B cell (primary cell): ENCODE measurements at regions of chr12 and their contacts with region 1.

Region 1: DNA sequence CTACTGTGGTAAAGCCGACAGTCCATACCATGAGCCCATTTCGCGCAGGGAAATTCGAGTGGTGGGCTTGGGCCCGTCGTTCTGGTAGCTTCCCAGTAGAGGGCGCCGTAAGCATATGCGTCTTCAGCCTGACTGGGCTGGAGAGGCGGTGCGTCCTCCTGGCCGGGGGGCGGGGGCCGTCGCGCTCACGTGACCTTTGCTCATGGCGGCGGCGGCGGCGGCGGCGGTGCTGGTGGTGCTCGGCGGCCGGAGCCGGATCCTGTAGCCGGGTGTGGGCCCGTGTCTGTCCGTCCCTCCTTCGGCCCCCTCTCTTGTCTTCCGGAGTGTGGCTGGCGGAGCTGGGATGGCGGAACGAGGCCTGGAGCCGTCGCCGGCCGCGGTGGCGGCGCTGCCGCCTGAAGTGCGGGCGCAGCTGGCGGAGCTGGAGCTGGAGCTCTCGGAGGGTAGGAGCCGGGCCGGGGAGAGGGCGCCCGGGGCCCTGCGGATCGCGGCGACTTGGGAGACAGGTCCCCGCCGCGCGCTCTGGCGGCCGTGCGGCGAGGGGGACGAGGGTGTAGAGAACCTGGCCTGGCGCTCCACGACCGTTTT is at the start of gene DIP2B:
- DNase-seq: peak; percentile 96
- ATAC-seq: peak; percentile 89
- H3K4me3 ChIP-seq: peak within 1 kb of the TSS; percentile 74 to 99 (median 87)
- H3K4me3 Mint-ChIP-seq: peak within 1 kb of the TSS; percentile 94
- H3K27ac ChIP-seq: peak within 1 kb of the TSS; percentile 65 to 89
- H3K27ac Mint-ChIP-seq: peak within 1 kb of the TSS; percentile 94
- H3K4me1 ChIP-seq: peaks cover 41 to 44% of the 10 kb centered on the region in 2 donors
- H3K4me1 Mint-ChIP-seq: peaks cover 44% of the 10 kb centered on the region
- H3K27me3 ChIP-seq: no peaks in the 10 kb centered on the region
- H3K27me3 Mint-ChIP-seq: no peaks in the 10 kb centered on the region
- CTCF ChIP-seq: peak; percentile 87
- total RNA-seq, gene DIP2B: 38.8 and 45.5 TPM in 2 replicates

Region 2: DNA sequence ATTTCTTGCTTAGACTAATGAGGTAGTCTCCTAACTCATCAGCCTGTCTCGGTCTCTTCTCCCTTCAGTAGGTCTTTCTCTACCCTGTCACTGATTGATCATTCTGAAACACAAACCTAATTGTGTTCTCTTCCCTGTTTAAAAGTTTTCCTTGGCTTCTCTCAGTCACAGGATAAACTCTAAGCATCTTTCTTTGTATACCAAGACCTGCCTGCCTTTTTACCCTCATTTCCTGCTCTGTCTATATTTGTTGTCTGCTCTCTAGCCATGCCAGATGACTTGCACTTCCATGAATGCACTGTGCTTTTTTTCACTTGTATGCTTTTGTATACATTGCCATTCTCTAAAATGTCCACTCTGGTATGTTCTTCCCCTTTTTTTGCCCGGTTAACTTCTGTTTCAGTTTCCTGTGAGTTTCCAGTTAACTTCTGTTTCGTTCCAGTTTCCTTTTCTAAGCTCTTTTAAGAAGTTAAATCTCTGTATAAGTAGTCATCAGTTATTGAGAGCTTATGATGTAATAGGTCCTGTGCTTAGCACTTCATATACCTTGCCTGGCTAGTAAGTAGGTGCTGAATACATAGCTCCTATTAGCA is 12.7 kb after region 1 on chr12:
- CTCF ChIA-PET with region 1: interaction called, 31 read pairs
- POLR2A ChIA-PET with region 1: interaction called, 10 read pairs
- intact Hi-C with region 1: loop called (anchors 1 kb)
- DNase-seq: peak; percentile 86
- ATAC-seq: peak; percentile 70
- H3K4me3 ChIP-seq: peak overlapping the region in 4 of 5 experiments; percentile 27 to 55 (median 38)
- H3K4me3 Mint-ChIP-seq: no peak overlapping the region
- H3K27ac ChIP-seq: peak overlapping the region; percentile 82 to 85
- H3K27ac Mint-ChIP-seq: no peak overlapping the region
- H3K4me1 ChIP-seq: peaks cover 86 to 97% of the 10 kb centered on the region in 2 donors
- H3K4me1 Mint-ChIP-seq: peaks cover 57% of the 10 kb centered on the region
- H3K27me3 ChIP-seq: no peaks in the 10 kb centered on the region
- H3K27me3 Mint-ChIP-seq: no peaks in the 10 kb centered on the region
- CTCF ChIP-seq: no peak

Region 3: DNA sequence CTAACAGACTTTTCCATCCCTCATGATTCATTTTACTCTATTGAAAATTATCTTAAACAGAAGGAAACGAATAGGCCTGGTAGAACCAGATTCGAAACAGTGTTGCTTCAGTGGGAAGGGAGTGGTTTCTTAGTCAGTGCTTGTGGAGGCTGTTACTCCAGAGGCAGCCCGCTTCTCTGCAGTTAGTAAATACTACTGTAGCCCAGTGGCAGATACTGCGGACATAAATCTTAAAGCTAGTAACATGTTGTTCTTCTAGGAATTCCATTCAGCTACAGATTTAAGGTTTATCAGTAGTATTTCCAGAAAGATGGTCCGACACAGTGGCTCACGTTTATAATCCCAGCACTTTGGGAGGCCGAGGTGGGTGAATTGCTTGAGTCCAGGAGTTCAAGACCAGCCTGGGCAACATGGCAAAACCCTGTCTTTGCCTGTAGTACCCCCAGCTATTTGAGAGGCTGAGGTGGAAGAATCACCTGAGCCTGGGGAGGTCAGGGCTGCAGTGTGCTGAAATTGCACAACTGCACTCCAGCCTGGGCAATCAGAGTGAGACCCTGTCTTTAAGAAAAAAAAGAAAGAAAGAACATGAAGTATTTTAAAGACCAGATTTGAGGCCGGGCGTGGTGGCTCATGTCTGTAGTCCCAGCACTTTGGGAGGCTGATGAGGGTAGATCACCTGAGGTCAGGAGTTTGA is 45.8 kb after region 1 on chr12:
- CTCF ChIA-PET with region 1: no interaction called
- POLR2A ChIA-PET with region 1: no interaction called
- intact Hi-C with region 1: loop called (anchors 10 kb)
- DNase-seq: no peak
- ATAC-seq: no peak
- H3K4me3 ChIP-seq: no peak overlapping the region
- H3K4me3 Mint-ChIP-seq: no peak overlapping the region
- H3K27ac ChIP-seq: peak overlapping the region in 1 of 2 donors; percentile 12
- H3K27ac Mint-ChIP-seq: no peak overlapping the region
- H3K4me1 ChIP-seq: peaks cover 3 to 18% of the 10 kb centered on the region in 2 donors
- H3K4me1 Mint-ChIP-seq: peaks cover 59% of the 10 kb centered on the region
- H3K27me3 ChIP-seq: no peaks in the 10 kb centered on the region
- H3K27me3 Mint-ChIP-seq: no peaks in the 10 kb centered on the region
- CTCF ChIP-seq: no peak

Region 4: DNA sequence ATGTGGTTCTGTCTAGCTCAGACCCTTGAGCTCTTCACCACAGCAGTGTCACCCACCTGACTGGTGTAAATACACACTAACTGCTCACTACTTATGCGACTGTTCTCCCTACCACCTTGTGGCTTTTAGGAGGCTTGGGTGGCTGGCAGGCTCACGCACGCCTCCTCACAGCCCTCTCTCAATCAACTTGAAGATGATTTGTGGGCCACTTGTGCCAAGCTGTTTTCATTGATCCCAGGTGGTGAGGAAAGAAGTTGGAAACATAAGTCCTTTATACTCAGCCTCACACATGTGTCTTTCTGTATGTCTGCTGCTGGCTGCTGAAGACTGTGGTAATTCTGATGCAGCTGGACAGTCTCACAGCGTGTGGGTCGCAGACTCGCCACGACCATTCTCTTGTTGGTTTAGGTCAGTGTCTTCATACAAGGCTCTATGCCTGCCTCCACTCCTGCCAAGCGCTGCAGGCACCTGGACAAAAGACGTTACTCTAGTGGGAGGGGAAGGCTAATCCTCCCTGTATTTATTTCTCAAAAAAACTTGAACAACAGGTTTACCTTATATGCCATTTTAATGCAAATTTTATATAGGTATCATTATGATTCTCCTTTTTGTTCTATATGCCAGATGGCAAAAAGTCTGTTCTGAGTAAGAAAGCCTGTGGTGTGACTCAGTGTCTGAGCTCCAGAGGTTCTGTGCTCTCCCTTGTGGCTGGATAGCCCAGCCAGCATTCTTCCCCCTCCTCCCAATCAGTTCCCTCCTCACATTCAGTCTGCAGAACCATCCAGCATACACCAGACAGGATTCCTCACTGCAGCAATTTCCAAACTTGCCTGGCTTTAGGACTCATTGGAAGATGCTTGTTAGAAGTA is 115.5 kb after region 1 on chr12:
- CTCF ChIA-PET with region 1: interaction called, 10 read pairs
- POLR2A ChIA-PET with region 1: no interaction called
- intact Hi-C with region 1: no loop called
- DNase-seq: no peak
- ATAC-seq: no peak
- H3K4me3 ChIP-seq: no peak overlapping the region
- H3K4me3 Mint-ChIP-seq: no peak overlapping the region
- H3K27ac ChIP-seq: peak overlapping the region in 1 of 2 donors; percentile 70
- H3K27ac Mint-ChIP-seq: peak overlapping the region; percentile 47
- H3K4me1 ChIP-seq: peaks cover 29% of the 10 kb centered on the region in 2 donors
- H3K4me1 Mint-ChIP-seq: peaks cover 62% of the 10 kb centered on the region
- H3K27me3 ChIP-seq: no peaks in the 10 kb centered on the region
- H3K27me3 Mint-ChIP-seq: no peaks in the 10 kb centered on the region
- CTCF ChIP-seq: no peak

Region 5: DNA sequence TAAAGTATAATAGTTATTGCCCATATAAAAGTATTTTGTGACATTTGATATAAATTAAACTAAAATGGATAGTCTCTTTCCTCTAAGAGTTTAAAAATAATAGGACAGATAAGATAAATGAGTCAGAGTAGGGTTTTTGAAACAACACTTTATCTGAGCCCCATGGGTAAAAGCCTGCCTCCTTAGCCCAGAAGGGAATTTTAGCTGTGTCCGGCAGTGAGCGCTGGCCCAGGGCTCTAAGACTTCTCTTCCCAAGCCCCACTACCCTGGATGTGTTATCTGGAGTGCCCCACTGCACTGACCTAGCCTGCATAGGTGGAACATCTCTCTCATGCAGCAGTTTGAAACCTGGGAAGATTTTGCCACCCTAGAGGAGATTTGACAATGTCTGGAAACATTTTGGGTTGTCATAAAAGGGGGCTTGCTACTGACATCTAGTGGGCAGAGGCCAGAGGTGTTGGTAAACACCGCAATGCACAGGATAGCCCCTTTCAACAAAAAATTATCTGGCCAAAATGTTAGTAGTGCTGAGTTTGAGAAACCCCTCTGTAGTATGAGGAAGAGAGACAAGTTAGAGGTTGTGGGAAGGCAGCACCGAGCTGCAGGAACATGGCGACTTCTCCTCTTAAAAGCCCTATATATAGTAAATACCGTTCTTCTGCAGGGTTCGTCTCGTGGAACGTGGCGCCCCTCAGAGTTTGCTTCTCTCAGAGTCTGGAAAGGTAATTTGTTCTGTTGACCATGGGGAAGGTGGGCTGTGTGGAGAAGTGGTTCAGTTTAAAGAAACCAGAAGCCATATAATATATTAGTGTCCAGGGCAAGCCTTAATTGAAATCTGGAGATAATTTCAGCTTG is 229.7 kb after region 1 on chr12:
- CTCF ChIA-PET with region 1: interaction called, 7 read pairs
- POLR2A ChIA-PET with region 1: no interaction called
- intact Hi-C with region 1: loop called (anchors 2 kb)
- DNase-seq: peak; percentile 41
- ATAC-seq: peak; percentile 39
- H3K4me3 ChIP-seq: no peak overlapping the region
- H3K4me3 Mint-ChIP-seq: no peak overlapping the region
- H3K27ac ChIP-seq: no peak overlapping the region
- H3K27ac Mint-ChIP-seq: no peak overlapping the region
- H3K4me1 ChIP-seq: no peaks in the 10 kb centered on the region
- H3K4me1 Mint-ChIP-seq: no peaks in the 10 kb centered on the region
- H3K27me3 ChIP-seq: no peaks in the 10 kb centered on the region
- H3K27me3 Mint-ChIP-seq: no peaks in the 10 kb centered on the region
- CTCF ChIP-seq: peak; percentile 73

Region 6: DNA sequence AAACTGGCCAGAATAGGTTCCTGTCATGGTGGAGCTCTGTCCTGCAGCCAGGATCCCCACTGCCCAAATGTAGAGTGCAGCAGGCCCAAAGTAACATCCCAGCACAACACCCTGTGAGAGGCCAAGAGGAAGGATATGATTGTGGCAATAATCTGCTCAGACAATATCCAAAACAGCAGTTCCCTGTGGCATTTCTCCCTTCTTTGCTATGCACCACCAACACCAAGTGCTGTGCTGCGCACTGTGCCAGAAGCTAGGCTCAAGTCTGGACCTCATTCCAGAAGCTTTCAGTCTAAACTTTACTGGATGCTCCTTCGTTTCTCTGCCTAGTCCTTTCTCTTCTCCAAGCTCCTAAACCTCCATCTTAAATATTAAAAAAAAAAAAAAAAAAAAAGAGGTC is 487.9 kb after region 1 on chr12:
- CTCF ChIA-PET with region 1: no interaction called
- POLR2A ChIA-PET with region 1: no interaction called
- intact Hi-C with region 1: no loop called
- DNase-seq: no peak
- ATAC-seq: no peak
- H3K4me3 ChIP-seq: no peak overlapping the region
- H3K4me3 Mint-ChIP-seq: no peak overlapping the region
- H3K27ac ChIP-seq: no peak overlapping the region
- H3K27ac Mint-ChIP-seq: no peak overlapping the region
- H3K4me1 ChIP-seq: no peaks in the 10 kb centered on the region
- H3K4me1 Mint-ChIP-seq: no peaks in the 10 kb centered on the region
- H3K27me3 ChIP-seq: no peaks in the 10 kb centered on the region
- H3K27me3 Mint-ChIP-seq: no peaks in the 10 kb centered on the region
- CTCF ChIP-seq: no peak